ENCODE measurements at regions of chr11 and their contacts with region 1.

Region 1: GRCh38 chr11:114036156-114036811 is 23.2 kb upstream of the ZBTB16 start:
- DNase-seq: peak; percentile 79
- ATAC-seq: peak; percentile 83
- H3K4me3 ChIP-seq: peak overlapping the region; percentile 68
- H3K27ac ChIP-seq: no peak overlapping the region
- H3K4me1 ChIP-seq: peaks cover 20% of the 10 kb centered on the region
- H3K27me3 ChIP-seq: peaks cover 18% of the 10 kb centered on the region
- CTCF ChIP-seq: peak; percentile 91

Region 2: DNA sequence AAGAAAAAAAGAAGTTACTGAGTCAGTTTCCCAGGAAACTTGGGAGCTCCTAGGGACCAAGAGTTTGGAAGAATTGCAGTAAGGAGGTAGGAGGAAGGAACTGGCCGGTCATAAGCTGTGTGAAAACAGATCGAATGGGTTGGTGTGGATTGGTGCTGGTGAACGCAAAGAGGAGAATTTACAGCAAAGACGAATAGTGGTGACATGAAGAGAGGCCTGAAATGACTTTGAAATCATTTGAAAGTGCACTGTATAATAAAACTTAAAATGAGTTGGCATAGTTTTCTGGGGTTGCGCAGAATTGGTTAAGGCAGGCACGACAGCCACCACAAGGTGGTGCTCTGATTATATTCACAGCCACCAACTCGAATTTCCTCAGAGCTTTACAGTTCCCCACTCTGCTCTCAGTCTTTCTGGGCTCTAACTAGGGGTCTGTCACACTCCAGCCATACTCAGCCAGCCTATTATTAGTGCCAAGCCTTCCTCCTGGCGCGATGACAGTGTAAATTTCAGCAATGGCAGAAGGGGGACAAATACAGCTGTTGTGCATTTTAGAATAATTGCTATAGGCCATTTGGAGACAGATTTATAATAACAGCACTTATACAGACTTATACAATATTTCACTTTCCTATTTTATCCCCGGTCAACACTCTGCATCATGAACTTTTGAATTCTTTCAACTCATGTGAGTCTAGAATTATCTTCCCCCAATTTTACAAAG is 140.0 kb before region 1 on chr11:
- CTCF ChIA-PET with region 1: no interaction called
- POLR2A ChIA-PET with region 1: no interaction called
- intact Hi-C with region 1: loop called (anchors 2 kb)
- DNase-seq: peak; percentile 56
- ATAC-seq: peak; percentile 81
- H3K4me3 ChIP-seq: no peak overlapping the region
- H3K27ac ChIP-seq: no peak overlapping the region
- H3K4me1 ChIP-seq: no peaks in the 10 kb centered on the region
- H3K27me3 ChIP-seq: peaks cover 19% of the 10 kb centered on the region
- CTCF ChIP-seq: peak; percentile 95

Region 3: GRCh38 chr11:113971506-113972195 is 64.6 kb before region 1 on chr11:
- CTCF ChIA-PET with region 1: no interaction called
- POLR2A ChIA-PET with region 1: no interaction called
- intact Hi-C with region 1: no loop called
- DNase-seq: no peak
- ATAC-seq: no peak
- H3K4me3 ChIP-seq: no peak overlapping the region
- H3K27ac ChIP-seq: no peak overlapping the region
- H3K4me1 ChIP-seq: no peaks in the 10 kb centered on the region
- H3K27me3 ChIP-seq: peaks cover 78% of the 10 kb centered on the region
- CTCF ChIP-seq: no peak

Region 4: GRCh38 chr11:114075891-114076441 is 39.7 kb after region 1 on chr11:
- CTCF ChIA-PET with region 1: no interaction called
- POLR2A ChIA-PET with region 1: no interaction called
- intact Hi-C with region 1: loop called (anchors 1 kb)
- DNase-seq: peak; percentile 51
- ATAC-seq: peak; percentile 67
- H3K4me3 ChIP-seq: no peak overlapping the region
- H3K27ac ChIP-seq: no peak overlapping the region
- H3K4me1 ChIP-seq: no peaks in the 10 kb centered on the region
- H3K27me3 ChIP-seq: peaks cover 87% of the 10 kb centered on the region
- CTCF ChIP-seq: peak; percentile 68

Region 5: GRCh38 chr11:114132944-114133394 is 96.7 kb after region 1 on chr11:
- CTCF ChIA-PET with region 1: no interaction called
- POLR2A ChIA-PET with region 1: no interaction called
- intact Hi-C with region 1: loop called (anchors 1 kb)
- DNase-seq: peak; percentile 88
- ATAC-seq: peak; percentile 88
- H3K4me3 ChIP-seq: no peak overlapping the region; the same call in 1 of the 2 replicates
- H3K27ac ChIP-seq: no peak overlapping the region
- H3K4me1 ChIP-seq: peaks cover 15% of the 10 kb centered on the region
- H3K27me3 ChIP-seq: peaks cover 76% of the 10 kb centered on the region
- CTCF ChIP-seq: no peak

Region 6: DNA sequence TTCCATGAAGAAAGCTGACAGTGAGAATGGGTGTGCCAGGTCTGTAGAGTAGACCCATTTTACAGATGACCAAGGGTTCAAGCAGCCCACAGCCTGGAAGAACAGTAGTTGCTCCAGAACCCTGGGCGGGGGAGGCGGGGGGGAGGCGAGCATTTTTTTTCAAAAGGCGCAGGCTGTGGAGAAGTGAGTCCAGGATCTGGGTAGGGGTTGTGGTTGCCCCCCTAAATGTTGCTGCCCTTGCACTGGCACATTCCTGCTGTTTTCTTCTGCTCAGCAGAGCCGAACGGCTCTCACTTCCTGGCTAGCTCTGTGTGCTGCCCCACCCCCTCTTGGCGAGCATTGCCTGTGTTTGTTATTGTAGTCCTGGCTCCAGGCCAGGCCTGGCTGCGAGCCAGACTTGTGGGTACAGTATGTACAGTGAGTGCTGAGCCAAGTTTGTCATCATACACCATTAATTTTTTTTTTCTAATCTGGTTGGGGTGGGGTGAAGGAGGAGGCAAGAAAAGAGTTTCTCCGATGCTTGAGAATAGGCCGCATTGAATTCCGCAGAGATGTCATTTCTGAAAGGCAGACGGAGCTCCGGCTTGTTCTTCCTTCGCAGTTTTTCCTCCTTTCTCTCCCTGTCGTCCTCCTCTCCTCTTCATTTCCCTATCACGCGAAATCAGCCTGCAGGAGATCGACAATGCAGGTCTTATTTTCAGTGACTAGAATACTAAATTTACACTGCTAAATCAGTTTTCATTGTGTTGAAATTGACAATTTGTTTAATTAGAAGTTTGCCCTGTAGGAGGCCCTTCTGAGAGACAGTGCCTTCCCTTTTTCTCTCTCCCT is 123.7 kb after region 1 on chr11:
- CTCF ChIA-PET with region 1: no interaction called
- POLR2A ChIA-PET with region 1: no interaction called
- intact Hi-C with region 1: loop called (anchors 10 kb)
- DNase-seq: peak; percentile 99
- ATAC-seq: peak; percentile 79
- H3K4me3 ChIP-seq: peak overlapping the region; percentile 15; the same call in 1 of the 2 replicates
- H3K27ac ChIP-seq: no peak overlapping the region
- H3K4me1 ChIP-seq: peaks cover 39% of the 10 kb centered on the region
- H3K27me3 ChIP-seq: peaks cover 74% of the 10 kb centered on the region
- CTCF ChIP-seq: no peak